ENCODE measurements at regions of chr1 and their contacts with region 1.

Region 1: GRCh38 chr1:94039514-94039870 is 81.5 kb downstream of the ABCA4 start:
- DNase-seq: peak; percentile 63
- ATAC-seq: no peak
- H3K4me3 Mint-ChIP-seq: no peak overlapping the region
- H3K27ac Mint-ChIP-seq: no peak overlapping the region
- H3K4me1 Mint-ChIP-seq: peaks cover 15% of the 10 kb centered on the region
- H3K27me3 Mint-ChIP-seq: peaks cover 45% of the 10 kb centered on the region

Region 2: DNA sequence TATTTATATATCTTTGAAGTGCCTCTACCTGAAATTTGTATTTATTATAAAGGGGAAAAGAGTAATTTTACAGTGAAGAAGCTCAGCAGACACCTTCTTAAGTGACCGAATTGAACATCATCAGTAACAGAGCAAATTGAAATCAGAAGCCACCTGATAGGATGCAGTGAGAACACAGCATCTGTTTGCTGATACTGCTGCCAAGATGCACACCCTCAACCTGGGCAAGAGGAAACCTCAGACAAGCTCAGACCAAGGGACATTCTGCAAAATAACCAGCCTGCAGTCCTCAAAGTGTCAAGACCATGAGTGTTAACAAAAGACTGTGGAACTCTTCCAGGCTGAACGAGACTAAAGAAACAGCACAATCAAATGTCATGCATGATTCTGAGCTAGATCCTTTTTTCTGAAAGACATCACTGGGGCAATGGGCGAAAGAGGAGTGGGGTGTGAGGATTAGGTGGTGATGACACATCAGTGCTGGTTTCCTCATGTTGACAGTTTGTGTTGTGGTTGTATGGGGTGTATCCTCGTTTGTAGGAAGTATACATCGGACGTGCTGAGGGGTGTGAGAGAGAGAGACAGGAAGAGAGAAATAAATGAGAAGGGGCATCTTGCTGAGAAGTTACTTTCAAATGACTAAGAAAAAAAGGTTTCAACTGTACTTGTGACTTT is 22.2 kb before region 1 on chr1:
- CTCF ChIA-PET with region 1: interaction called, 18 read pairs
- DNase-seq: peak; percentile 81
- ATAC-seq: peak; percentile 99
- H3K4me3 Mint-ChIP-seq: peak overlapping the region; percentile 2
- H3K27ac Mint-ChIP-seq: peak overlapping the region; percentile 89
- H3K4me1 Mint-ChIP-seq: peaks cover 26% of the 10 kb centered on the region
- H3K27me3 Mint-ChIP-seq: peaks cover 9% of the 10 kb centered on the region

Region 3: GRCh38 chr1:94025383-94026340 is 13.8 kb before region 1 on chr1:
- CTCF ChIA-PET with region 1: interaction called, 62 read pairs
- DNase-seq: no peak
- ATAC-seq: no peak
- H3K4me3 Mint-ChIP-seq: no peak overlapping the region
- H3K27ac Mint-ChIP-seq: no peak overlapping the region
- H3K4me1 Mint-ChIP-seq: no peaks in the 10 kb centered on the region
- H3K27me3 Mint-ChIP-seq: peaks cover 8% of the 10 kb centered on the region

Region 4: GRCh38 chr1:94335950-94336349 is 296.5 kb after region 1 on chr1:
- CTCF ChIA-PET with region 1: interaction called, 20 read pairs
- DNase-seq: no peak
- ATAC-seq: peak; percentile 39
- H3K4me3 Mint-ChIP-seq: no peak overlapping the region
- H3K27ac Mint-ChIP-seq: no peak overlapping the region
- H3K4me1 Mint-ChIP-seq: peaks cover 1% of the 10 kb centered on the region
- H3K27me3 Mint-ChIP-seq: peaks cover 19% of the 10 kb centered on the region